BJ (cell line): ENCODE measurements at regions of chr18 and their contacts with region 1.

Region 1: GRCh38 chr18:59823596-59824195 is 76.1 kb upstream of the PMAIP1 start:
- DNase-seq: no peak
- H3K4me3 ChIP-seq: no peak overlapping the region
- H3K27me3 ChIP-seq: no peaks in the 10 kb centered on the region
- CTCF ChIP-seq: peak; percentile 85

Region 2: DNA sequence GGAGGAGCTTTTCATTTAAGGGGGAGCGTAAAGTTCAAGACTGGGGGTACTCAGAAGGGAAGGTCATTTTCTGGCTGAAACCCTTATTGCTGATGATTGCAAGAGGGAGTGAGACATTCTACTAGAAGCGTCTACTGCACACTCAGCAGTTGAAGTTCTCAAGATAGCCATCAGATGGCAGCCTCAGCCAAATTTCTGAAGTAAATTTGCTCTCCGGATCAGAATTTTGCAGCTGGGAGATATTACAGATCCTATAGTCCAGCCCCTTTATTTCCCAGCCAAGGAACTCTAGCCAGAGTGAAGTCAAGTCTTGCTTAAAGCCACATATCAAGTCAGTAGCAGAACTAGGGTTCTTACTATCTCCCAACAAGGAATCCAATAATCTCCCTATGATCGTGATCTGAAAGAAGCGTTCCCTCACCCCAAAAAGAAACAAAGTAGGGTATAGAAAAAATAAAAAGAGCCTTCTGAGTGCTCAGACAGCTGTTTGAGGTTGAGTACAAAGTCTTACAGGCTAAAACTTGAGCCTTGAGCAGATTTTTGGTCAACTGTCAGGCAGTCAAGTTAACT is 574.4 kb before region 1 on chr18:
- CTCF ChIA-PET with region 1: interaction called, 20 read pairs
- POLR2A ChIA-PET with region 1: no interaction called
- DNase-seq: peak; percentile 47
- H3K4me3 ChIP-seq: no peak overlapping the region
- H3K27me3 ChIP-seq: peaks cover 5% of the 10 kb centered on the region; the same call in 1 of the 2 replicates
- CTCF ChIP-seq: peak; percentile 83

Region 3: DNA sequence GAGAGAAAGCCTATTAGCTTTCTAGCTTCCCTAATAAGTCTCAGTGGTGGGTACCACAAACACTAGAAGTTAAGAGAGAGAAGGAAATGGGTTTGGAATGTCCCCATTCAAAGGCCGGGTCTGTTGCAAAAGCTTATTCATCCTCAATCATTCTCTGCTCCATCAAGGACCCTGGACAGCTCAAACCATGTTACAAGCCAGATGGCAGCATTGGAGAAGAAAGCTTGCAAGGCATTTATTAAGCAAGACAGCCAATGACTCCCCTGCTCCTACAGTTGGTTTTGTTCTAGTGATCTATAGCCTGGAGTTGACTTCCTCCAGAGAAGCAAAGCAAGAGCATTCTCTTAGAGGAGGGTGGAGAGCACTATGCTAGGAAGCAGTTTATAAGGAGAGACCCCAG is 377.7 kb before region 1 on chr18:
- CTCF ChIA-PET with region 1: interaction called, 10 read pairs
- POLR2A ChIA-PET with region 1: no interaction called
- DNase-seq: no peak
- H3K4me3 ChIP-seq: no peak overlapping the region
- H3K27me3 ChIP-seq: no peaks in the 10 kb centered on the region
- CTCF ChIP-seq: 0 out of 2 replicates have a peak, but pooled peaks have one; percentile 4

Region 4: DNA sequence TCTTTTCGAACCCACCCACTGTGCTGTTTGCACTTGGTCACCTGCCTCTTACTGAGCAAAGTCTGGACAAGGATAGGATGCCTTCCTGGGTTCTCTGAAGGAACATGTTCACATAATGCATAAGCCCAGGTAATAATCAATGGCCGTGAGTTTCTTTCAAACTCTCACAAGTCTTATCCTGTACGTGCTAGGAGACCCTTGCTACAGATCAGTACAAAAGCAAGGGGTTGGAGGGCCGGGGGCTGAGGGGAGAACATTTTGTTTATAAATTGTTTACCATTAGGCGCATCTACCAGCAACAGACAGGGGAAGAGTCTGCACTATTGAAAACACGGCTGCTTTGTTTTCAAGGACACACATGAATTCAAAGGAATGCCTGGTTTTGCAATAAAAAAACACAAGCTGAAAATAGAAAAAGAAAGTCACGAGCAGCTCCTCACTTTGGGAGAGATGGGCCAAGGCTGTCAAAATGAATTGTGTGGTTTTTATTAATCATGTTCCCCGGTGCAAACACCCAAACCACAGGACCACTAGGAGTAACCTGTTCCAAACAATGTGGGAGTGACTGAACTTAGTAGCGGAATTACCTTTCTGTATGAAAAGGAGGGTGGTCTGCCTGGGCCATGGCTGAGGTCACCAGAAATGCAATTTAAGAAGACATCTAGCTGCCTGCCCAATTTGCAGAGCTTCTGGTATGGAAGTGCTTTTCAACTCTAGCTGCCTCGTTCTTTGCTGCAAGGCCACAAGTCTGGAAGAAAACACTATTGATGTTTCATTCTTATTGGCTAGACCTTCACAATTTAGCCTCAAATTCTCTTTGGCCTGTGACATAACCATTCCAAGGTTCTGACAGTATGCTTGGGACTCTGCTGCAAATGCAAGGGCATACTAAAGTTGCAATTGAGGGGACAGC is 200.0 kb before region 1 on chr18:
- CTCF ChIA-PET with region 1: interaction called, 22 read pairs
- POLR2A ChIA-PET with region 1: no interaction called
- DNase-seq: peak; percentile 28
- H3K4me3 ChIP-seq: no peak overlapping the region
- H3K27me3 ChIP-seq: no peaks in the 10 kb centered on the region
- CTCF ChIP-seq: no peak

Region 5: DNA sequence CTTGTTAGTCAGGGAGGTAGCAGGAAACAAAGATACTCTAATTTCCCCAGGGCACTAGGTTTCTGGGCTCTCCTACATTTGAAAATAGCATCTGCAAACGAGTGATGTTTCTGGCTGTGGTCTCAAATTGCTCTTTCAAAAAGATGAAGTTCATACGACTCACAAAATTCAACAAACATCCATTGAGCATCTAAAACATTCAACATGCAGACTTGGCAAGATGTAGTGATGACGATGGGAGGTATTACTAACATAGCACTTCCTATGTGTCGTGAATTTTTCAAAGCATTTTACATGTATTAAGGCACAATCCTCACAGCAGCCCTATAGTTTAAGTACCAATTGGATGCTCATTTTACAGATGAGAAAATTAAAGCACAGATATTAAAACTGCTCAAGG is 131.7 kb before region 1 on chr18:
- CTCF ChIA-PET with region 1: interaction called, 76 read pairs
- POLR2A ChIA-PET with region 1: interaction called, 3 read pairs
- DNase-seq: no peak
- H3K4me3 ChIP-seq: no peak overlapping the region
- H3K27me3 ChIP-seq: no peaks in the 10 kb centered on the region
- CTCF ChIP-seq: no peak

Region 6: DNA sequence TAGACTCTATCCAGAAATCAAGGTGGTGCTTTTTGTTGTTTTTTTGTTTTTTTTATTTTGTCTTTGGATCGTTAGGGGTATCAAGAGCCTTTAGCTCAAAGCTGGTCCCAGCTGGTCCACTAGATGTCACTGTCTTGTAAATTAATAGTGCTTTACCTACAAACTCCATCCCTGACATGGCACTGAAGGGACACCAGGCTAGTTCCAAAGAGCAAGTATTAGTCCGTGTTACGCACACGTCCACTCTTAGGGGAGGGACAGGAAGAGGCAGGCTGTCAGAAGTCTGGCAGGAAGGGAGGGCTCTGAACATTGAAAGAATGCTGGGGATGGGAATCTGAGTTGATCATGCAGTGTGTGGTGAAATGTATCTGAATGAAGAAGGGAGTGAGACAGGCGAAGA is 40.6 kb before region 1 on chr18:
- CTCF ChIA-PET with region 1: interaction called, 41 read pairs
- POLR2A ChIA-PET with region 1: no interaction called
- DNase-seq: no peak
- H3K4me3 ChIP-seq: no peak overlapping the region
- H3K27me3 ChIP-seq: no peaks in the 10 kb centered on the region
- CTCF ChIP-seq: peak; percentile 69

Region 7: DNA sequence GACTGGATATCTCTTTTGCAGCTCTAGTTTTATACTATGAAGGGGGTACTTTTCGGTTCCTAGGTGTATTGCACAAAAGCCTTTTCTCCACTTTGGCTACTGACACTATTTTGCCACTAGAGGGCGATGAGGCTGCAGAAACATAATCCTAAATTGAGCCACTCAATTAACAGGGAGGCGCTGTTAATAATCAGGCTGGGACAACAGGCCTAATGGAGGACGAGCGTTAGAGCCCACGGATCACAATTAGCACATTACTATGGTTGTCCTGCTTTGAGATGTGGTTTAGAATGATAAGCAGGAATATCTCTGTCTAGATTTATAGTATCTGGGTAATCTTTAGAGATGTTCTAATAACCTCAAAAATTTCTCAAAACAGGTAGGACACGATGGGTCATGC is 13.9 kb after region 1 on chr18:
- CTCF ChIA-PET with region 1: interaction called, 22 read pairs
- POLR2A ChIA-PET with region 1: no interaction called
- DNase-seq: no peak
- H3K4me3 ChIP-seq: no peak overlapping the region
- H3K27me3 ChIP-seq: peaks cover 2% of the 10 kb centered on the region; the same call in 1 of the 2 replicates
- CTCF ChIP-seq: peak; percentile 91

Region 8: DNA sequence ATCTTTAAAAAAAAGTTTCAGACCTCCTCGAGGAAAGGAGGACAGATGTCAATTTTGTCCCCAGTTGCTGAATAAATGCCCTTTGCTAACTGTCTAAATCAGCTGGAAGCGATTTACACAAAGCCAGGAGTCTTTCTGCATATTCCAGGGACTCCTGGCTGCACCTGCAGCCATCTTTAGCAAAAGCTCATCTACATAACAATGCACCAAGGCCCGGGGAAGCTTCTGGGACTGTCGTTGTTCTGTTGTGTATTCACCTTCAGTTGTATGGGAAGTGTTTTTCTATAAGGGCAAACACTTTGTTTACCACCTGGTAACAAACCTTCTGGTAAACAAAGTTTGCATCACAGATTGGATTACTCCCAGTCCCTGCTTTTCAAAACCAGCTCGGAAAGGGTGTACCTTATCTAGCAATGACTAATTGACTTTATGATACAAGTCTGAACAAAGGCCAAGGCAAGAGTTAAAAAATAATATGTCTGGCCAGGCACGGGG is 40.5 kb after region 1 on chr18:
- CTCF ChIA-PET with region 1: no interaction called
- POLR2A ChIA-PET with region 1: no interaction called
- DNase-seq: no peak
- H3K4me3 ChIP-seq: no peak overlapping the region
- H3K27me3 ChIP-seq: no peaks in the 10 kb centered on the region
- CTCF ChIP-seq: no peak